ENCODE measurements at regions of chr17 and their contacts with region 1.

Region 1: DNA sequence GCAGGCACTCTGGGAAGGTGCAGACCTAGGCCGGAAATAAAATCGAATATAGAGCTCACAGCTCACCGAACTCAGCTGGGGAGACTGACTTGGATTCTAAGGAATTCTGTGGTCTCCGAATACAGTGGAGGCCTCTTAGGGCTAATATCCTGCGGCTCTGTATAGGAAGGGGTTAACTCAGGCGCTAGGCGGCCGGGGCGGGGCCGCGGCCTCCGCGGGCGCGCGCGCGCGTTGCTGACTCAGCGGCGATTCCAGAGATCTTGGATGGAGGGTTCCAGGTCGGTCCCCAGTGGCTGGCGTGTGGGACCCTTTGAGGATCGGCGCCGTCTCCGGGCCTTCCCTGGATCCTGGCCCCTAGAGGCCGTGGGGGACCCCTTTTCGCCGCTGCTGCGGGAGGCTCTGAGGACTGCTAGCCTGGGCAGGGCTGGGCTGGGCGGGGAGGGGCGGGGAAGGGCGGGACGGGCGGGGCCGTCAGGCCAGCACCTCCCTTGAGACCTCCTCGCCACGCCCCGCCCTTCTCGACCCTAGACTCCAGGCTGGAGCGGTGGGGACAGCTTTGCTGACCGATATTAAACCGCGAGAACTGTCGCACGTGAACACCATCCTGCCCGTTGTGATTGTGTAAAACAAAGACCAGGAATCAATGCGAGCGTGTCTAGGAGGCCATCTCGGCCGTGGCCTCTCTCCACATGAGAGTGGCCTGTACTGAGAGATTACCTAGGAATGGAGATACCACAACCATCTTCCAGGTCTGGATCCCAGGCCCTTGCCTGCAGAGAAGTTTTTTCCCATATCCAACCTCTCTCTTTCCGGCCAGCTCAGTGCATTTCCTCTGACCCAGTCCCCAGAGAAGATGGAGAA is 1.4 kb upstream of the PLEKHH3 start:
- DNase-seq: peak in 2 of 3 donors; percentile 79 to 85
- H3K4me3 ChIP-seq: peak overlapping the region; percentile 46 to 83 (median 74)
- H3K27ac ChIP-seq: peak overlapping the region in 1 of 2 experiments; percentile 79
- H3K4me1 ChIP-seq: peaks cover 6 to 89% (median 80%) of the 10 kb centered on the region in 4 experiments
- H3K27me3 ChIP-seq: peaks cover 1 to 59% (median 24%) of the 10 kb centered on the region in 5 experiments

Region 2: GRCh38 chr17:42609182-42609813 is 68.9 kb before region 1 on chr17 and contains the starts of genes RETREG3 and TUBG1:
- CTCF ChIA-PET with region 1: interaction called, 10 read pairs
- POLR2A ChIA-PET with region 1: interaction called, 5 read pairs
- DNase-seq: peak; percentile 98 to 99 (median 99)
- H3K4me3 ChIP-seq: peak within 1 kb of the TSS; percentile 94 to 100 (median 98)
- H3K27ac ChIP-seq: peak within 1 kb of the TSS; percentile 70 to 92
- H3K4me1 ChIP-seq: peaks cover 5 to 31% (median 19%) of the 10 kb centered on the region in 4 experiments
- H3K27me3 ChIP-seq: no peaks in the 10 kb centered on the region

Region 3: DNA sequence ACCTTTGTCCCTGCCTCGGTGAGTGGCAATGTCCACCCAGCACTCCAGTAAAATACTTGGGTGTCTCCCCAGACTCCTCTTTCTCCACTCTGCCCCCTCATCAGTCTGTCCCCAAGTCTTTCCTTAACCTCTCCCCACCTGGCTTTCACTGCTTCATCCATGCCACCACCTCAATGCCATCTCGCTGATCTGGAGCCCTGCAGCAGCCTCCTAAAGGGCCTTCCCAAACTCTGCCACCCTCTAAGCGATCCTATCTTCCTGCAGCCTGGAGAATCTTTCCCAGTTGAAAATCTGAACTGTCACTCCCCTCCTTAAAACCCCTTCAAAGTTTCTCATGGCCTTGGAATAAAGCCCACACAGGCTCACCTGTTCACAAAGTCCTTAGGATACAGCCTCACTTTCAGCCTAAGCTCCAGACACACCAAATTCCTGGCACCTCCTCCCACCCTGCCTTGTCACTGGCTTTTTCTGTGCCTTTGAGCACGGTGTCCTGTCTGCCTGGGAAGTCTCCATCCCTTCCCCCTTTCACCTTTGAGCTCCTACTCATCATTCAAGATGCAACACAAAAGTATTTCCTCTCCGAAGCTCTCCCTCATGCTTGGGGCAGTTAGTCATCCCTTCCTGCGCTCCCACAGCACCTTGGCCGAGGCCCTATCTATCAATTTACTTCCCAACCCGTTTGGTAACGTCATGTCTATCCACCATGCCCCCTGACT is 105.1 kb after region 1 on chr17:
- CTCF ChIA-PET with region 1: no interaction called
- POLR2A ChIA-PET with region 1: no interaction called
- DNase-seq: no peak
- H3K4me3 ChIP-seq: no peak overlapping the region
- H3K27ac ChIP-seq: no peak overlapping the region
- H3K4me1 ChIP-seq: peaks cover 0 to 37% (median 25%) of the 10 kb centered on the region in 4 experiments
- H3K27me3 ChIP-seq: peaks cover 6 to 90% (median 41%) of the 10 kb centered on the region in 5 experiments